AG04450 (cell line): ENCODE measurements at regions of chr12 and their contacts with region 1.

Region 1: GRCh38 chr12:92987362-92987761 is 58.3 kb upstream of the EEA1 start:
- DNase-seq: peak; percentile 55
- H3K4me3 ChIP-seq: no peak overlapping the region
- H3K27ac ChIP-seq: no peak overlapping the region
- H3K27me3 ChIP-seq: no peaks in the 10 kb centered on the region
- CTCF ChIP-seq: peak; percentile 58

Region 2: GRCh38 chr12:92445253-92446082 is 541.9 kb before region 1 on chr12:
- CTCF ChIA-PET with region 1: no interaction called
- POLR2A ChIA-PET with region 1: no interaction called
- DNase-seq: no peak
- H3K4me3 ChIP-seq: no peak overlapping the region
- H3K27ac ChIP-seq: no peak overlapping the region
- H3K27me3 ChIP-seq: no peaks in the 10 kb centered on the region
- CTCF ChIP-seq: no peak

Region 3: DNA sequence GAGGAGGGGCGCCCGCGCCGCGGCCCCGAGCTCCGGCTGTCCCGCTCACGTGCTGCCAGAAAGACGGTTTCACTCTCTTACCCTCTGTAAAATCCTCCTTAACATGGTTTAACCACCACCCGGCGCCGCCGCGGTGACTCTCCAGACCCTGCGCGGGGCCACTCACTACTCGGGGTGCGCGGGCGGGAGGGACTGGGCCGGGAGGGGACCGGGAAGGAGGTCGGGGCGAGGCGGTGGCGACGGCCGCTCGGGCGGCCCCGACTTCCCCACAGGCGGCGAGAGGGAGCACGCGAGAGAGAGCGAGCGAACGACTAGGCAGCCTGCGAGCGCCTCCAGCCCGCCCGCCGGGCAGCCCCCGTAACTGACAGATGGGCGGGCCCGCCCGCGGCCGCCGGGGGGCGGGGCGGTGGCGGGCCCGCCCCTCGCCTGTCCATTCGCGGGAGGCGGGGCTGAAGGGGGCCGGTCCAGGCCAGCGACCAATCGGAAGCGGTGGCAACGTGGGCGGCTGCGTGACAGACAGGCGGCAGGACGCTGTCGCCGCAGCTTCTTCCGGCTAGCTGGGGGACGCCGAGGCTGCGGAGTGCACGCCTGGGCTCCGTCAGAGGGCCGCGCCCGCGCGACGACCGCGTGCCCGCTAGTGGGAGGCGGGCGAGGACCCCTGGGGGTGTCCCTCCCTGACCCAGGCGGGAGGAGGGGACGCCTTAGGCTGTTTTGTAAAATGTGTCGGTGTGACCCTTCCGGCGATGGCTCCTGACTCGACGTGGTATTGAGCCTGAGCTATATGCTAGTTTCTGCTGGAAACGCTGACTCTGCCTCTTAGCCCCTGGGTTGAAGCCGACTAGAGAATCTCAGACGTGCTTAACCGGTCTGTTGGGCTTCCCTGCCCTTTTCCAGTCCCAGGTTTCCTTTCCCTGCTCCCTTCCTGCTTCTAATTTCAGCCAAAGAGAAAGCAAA is 58.1 kb before region 1 on chr12 and contains the start of gene EEA1:
- CTCF ChIA-PET with region 1: interaction called, 14 read pairs
- POLR2A ChIA-PET with region 1: interaction called, 5 read pairs
- DNase-seq: peak; percentile 80
- H3K4me3 ChIP-seq: peak within 1 kb of the TSS; percentile 82
- H3K27ac ChIP-seq: peak within 1 kb of the TSS; percentile 86
- H3K27me3 ChIP-seq: no peaks in the 10 kb centered on the region
- CTCF ChIP-seq: no peak
- polyA plus RNA-seq, gene EEA1: 14.0 and 18.4 TPM in 2 replicates

Region 4: DNA sequence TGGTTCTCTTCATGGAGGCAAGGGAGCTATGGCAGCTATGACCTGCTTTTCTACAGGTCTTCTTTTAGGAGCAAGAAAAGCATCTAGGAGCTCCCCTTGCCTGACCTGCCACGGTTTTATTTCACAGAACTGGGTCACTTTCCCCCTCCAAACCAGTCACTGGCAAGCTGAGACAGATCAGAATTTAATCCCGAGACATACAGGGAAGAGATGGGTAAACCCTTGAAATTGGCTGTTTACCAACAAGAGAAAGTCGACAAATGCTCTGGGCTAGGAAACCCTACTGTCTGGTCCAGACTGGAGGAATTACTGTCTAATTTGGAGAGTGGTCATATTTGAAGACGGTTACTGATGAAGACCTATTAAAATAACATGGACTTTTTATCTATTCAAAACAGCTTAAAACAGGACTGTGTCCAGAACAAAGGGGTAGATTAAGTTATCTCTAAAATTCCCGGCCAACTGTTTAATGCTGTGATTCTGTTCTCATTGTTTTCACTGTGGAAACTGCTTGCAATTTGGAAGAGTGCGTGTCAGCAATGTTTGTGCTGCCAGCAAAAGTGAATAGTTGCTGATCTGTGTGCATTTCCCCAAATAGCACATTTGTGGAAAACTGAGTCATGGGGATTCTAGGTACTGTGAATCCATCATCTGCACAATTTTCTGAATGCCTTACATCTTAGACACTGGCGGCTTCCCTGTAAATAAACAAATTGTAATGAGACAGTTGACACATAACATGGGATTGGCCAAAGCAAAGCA is 15.1 kb after region 1 on chr12:
- CTCF ChIA-PET with region 1: interaction called, 13 read pairs
- POLR2A ChIA-PET with region 1: no interaction called
- DNase-seq: peak; percentile 52
- H3K4me3 ChIP-seq: no peak overlapping the region
- H3K27ac ChIP-seq: no peak overlapping the region
- H3K27me3 ChIP-seq: no peaks in the 10 kb centered on the region
- CTCF ChIP-seq: no peak

Region 5: DNA sequence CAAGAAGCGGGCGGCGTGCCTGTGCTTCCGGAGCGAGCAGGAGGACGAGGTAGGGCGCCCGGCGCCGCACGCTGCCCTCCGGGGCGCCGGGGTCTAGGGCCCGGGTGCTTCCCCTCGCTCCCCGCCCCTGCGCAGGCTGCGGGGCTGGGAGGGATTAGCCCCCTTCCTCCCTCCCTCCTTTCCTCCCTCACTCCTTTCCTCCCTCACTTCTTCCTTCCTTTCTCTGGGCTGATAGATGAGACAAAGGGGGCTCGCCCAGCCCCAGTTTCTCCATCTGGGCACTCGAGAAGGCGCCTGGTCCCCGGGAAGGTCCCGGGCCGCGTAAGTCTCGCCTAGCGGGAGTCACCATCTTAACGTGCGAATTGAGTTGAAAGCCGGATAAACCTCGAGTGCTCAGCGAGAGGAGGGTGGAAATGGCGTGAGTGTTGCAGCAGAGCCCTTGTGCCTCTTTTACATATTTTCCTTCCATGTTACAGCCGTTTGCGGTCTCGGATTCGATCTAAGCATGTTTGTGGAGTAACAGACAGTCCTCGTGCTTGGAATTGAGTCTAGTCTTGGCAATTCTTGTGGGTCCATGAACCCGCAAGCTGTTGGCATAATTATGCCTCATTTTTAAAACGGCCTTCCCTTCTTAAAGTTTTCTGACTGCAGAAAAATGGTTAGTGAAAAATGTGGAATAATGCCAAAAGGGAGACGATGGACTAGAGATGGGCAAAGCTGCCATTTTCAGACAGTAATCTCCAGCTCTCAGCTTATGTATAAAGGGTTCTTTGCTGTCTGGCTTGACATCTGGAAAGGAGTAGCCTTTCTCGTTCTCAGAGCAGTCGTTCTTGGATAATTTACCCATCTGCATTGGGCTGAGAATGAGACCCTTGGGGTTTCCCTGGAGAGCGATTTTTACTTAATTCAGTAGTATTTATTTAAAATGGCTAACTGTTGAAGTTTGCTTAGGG is 391.3 kb after region 1 on chr12:
- CTCF ChIA-PET with region 1: interaction called, 49 read pairs
- POLR2A ChIA-PET with region 1: no interaction called
- DNase-seq: peak; percentile 32
- H3K4me3 ChIP-seq: peak overlapping the region; percentile 91
- H3K27ac ChIP-seq: peak overlapping the region; percentile 88
- H3K27me3 ChIP-seq: no peaks in the 10 kb centered on the region
- CTCF ChIP-seq: no peak

Region 6: DNA sequence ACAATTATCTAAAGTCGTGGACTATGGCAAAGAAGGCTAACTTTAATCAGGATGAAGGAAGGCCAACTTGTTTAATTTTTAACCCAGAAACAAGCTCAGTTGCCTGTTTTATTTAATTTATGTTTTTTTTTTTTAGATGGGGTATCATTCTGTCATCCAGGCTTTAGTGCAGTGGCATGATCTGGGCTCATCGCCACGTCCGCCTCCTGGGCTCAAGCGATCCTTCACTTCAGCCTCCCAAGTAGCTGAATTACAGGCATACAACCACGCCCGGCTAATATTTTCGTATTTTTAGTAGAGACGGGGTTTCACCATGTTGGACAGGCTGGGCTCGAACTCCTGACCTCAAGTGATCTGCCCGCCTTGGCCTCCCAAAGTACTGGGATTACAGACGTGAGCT is 410.1 kb after region 1 on chr12:
- CTCF ChIA-PET with region 1: interaction called, 164 read pairs
- POLR2A ChIA-PET with region 1: no interaction called
- DNase-seq: no peak
- H3K4me3 ChIP-seq: no peak overlapping the region
- H3K27ac ChIP-seq: no peak overlapping the region
- H3K27me3 ChIP-seq: no peaks in the 10 kb centered on the region
- CTCF ChIP-seq: no peak